ENCODE measurements at regions of chr6 and their contacts with region 1.

Region 1: DNA sequence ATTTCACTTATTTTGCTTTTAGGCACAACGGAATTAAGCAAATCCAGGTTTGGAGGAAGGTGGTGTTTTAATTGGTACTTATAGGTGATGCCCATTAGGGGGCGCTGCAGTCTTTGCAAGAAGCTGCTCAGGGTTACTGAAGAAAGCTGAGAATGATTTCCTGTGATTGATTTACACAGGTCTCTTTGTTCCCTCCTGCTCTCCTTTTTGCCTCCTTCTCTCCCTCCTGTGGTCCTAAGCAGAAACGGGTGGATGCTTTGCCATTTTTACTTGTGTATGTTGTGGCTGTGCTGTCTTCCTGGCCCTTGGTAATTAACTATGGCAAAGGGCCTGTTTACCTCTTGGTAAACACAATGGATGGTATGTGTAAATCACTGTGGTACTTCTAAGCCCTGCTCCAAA is 97.8 kb downstream of the ANKS1A start:
- DNase-seq: peak; percentile 68
- CTCF ChIP-seq: peak; percentile 62

Region 2: GRCh38 chr6:34638834-34639736 is 347.8 kb before region 1 on chr6:
- CTCF ChIA-PET with region 1: no interaction called
- POLR2A ChIA-PET with region 1: no interaction called
- DNase-seq: peak; percentile 63
- CTCF ChIP-seq: no peak

Region 3: DNA sequence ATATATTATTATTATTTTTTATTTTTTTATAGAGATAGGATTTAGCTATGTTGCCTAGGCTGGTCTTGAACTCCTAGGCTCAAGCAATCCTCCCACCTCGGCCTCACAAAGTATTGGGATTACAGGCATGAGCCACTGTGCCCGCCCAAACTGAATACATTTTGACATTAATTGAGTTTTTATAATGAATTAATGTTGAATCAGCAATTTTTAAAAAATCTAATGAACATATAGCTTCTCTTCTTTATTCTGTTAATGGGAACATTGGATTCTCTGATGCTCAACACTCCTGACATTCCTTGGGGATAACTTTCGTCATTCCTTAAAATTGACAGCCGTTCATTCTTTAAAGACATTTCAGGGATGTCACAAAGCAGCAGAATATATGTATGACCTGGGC is 45.4 kb before region 1 on chr6:
- CTCF ChIA-PET with region 1: no interaction called
- POLR2A ChIA-PET with region 1: no interaction called
- DNase-seq: no peak
- CTCF ChIP-seq: no peak

Region 4: GRCh38 chr6:34973547-34974248 is 13.1 kb before region 1 on chr6:
- CTCF ChIA-PET with region 1: interaction called, 34 read pairs
- POLR2A ChIA-PET with region 1: no interaction called
- DNase-seq: no peak
- CTCF ChIP-seq: no peak

Region 5: GRCh38 chr6:35016502-35017321 is 29.9 kb after region 1 on chr6:
- CTCF ChIA-PET with region 1: interaction called, 43 read pairs
- POLR2A ChIA-PET with region 1: no interaction called
- DNase-seq: no peak
- CTCF ChIP-seq: no peak

Region 6: GRCh38 chr6:35146453-35146852 is 159.6 kb after region 1 on chr6:
- CTCF ChIA-PET with region 1: interaction called, 13 read pairs
- POLR2A ChIA-PET with region 1: no interaction called
- DNase-seq: no peak
- CTCF ChIP-seq: peak; percentile 34

Region 7: DNA sequence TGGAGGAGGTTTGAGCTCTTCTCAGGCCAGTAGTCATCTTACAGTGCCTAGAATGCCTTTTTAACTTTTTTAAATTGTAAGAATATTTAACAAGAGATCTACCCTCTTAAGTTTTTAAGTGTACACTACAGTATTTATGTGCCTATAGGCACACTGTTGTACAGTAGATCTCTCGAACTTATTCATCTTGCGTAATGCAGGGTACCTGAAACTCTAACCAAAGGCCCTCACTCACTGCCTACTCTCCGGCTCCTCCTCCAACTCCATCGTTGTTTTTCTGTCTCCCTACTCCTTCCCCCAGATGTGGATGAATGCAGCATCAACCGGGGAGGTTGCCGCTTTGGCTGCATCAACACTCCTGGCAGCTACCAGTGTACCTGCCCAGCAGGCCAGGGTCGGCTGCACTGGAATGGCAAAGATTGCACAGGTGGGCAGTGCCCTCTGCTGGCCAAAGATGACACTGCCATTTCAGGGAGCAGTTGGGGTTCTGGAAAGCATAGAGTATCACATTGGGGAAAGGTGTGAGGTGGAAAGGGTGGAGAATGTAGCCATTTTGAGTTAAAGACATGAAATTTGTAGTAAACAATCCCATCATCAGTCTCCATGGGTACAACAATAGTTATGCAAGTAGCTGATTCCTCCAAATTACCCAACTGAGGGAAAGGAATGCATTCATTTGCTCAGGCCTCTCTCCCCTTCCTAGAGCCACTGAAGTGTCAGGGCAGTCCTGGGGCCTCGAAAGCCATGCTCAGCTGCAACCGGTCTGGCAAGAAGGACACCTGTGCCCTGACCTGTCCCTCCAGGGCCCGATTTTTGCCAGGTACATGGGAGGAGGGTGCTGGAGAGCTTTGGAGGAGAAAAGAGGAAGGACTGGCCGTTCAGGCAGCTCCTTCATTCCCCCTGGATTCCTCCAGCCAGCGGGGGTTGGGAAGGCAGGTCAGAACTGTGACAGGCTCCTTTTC is 254.3 kb after region 1 on chr6:
- CTCF ChIA-PET with region 1: interaction called, 73 read pairs
- POLR2A ChIA-PET with region 1: no interaction called
- DNase-seq: peak; percentile 86
- CTCF ChIP-seq: peak; percentile 99

Region 8: DNA sequence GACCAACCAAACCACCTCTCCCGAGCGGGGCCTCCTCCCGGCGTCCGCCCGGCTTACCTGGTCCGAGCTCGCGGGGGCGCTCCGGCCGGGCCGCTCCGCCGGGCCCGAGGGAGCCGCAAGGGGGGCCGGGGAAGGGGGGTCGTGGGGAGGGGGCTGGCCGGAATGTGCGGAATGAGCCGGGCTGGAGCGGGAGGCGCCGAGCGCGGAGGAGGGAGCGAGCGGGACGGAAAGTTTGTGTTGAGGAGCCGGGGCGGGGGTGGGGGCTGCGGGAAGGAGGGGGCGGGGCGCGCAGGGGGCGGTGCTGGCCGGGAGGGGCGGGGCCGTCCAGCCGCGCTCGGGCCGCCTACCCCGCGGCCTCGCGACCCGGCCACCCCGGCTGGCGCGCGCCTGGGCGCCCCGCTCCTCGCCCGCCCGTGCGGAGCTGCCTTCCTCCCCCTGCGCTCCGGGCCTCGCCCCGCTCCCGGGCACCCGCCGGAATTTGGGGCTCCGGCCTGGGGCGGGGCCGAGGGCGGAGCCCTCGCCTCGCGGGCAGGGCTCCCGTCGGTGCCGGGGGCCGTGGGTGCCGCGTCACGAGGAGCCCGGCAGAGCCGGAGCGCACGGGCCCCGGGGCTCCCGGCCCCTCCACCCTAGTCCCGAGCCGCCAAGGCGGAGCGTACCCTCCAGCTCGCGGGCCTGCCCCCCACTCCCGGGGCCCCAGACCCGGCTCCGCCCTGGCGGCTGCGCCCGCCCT is 510.2 kb after region 1 on chr6 and contains the start of gene TEAD3:
- CTCF ChIA-PET with region 1: no interaction called
- POLR2A ChIA-PET with region 1: no interaction called
- DNase-seq: peak; percentile 89
- CTCF ChIP-seq: no peak

Measured in GM10248 (cell line).